HepG2 (cell line): ENCODE measurements at regions of chr6 and their contacts with region 1.

Region 1: DNA sequence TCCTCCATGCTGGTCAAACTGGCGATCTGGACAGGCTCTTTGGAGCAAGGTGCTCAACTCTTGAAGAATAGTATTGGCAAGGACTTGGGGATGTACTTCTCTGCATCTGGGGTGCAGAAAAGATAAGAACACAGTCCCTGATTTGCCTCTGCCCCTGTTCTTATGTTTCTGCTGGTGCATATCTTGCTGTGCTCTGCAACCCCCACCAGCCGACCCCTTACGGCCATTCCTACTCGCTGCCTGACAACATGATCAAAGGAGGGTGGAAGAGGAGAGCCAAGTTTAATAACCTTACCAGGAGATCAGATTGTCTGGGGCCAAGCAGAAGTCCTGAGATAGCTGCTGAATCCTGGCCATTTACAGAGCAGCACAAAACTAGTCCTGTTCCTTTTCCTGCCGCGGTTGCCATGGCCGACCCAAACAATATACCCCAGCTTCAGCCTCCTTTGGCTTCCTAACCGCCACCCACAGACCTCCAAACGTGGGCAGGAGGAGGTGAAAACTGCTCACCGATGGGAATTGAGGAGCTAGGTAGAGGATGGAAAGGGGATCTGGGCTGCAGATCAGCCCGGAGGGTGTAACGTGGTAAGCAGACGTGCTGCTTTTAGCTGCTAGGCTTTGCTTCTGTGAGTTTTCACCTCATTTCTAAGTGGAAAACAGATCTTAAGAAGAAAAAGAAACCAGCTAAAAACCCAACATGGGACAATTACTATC is 60.9 kb downstream of the ATXN1 start:
- DNase-seq: no peak
- ATAC-seq: no peak; the same call in 2 of the 3 replicates
- H3K4me3 ChIP-seq: no peak overlapping the region; a peak in 1 of 6 replicates
- H3K27ac ChIP-seq: peak overlapping the region; percentile 71
- H3K4me1 ChIP-seq: peaks cover 61% of the 10 kb centered on the region
- H3K27me3 ChIP-seq: no peaks in the 10 kb centered on the region
- CTCF ChIP-seq: no peak
- EP300 ChIP-seq: no peak
- POLR2A ChIP-seq: no peak
- RAD21 ChIP-seq: no peak

Region 2: DNA sequence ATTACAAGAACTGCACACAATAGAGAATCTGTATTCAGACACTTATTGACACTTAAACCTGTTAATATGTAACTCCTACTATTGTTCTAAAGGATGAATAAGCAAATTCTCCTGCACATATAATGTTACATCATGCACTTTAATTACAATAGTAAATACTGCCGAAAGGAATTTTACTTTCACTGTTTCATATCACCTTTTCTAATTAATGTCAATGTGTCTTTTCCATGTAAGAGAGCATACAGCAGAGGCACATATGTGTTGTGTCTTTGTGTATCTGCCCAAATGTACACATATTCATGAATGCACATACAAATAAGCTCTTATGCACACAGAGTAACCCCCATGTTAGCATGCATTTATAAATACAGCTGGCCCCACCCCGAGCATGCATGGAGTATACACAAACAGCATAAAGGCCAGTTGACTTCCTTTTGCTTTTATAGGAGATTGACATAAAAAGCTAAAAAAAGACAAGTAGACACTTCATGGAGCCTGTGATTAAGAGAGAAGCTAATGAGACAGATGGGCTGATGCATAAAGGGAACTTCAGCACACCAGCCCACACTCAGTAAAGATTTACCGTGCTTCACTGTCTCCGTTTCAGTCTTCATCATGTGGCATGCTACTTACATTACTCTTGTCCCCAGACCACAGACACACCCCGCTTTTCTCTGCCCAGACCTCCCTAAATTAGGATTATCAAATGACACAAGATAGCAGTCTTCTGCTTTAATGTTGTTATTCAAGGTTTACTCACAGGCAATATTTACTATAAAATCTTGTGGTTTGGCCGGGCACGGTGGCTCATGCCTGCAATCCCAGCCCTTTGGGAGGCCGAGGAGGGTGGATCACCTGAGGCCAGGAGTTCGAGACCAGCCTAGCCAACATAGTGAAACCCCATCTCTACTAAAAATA is 123.6 kb before region 1 on chr6:
- CTCF ChIA-PET with region 1: no interaction called
- POLR2A ChIA-PET with region 1: no interaction called
- in situ Hi-C with region 1: no loop called
- intact Hi-C with region 1: no loop called
- DNase-seq: peak; percentile 65
- ATAC-seq: peak; percentile 33; the same call in 2 of the 3 replicates
- H3K4me3 ChIP-seq: no peak overlapping the region
- H3K27ac ChIP-seq: no peak overlapping the region
- H3K4me1 ChIP-seq: peaks cover 35% of the 10 kb centered on the region
- H3K27me3 ChIP-seq: no peaks in the 10 kb centered on the region
- CTCF ChIP-seq: no peak
- EP300 ChIP-seq: peak in 1 of 2 experiments; percentile 17; a peak in 1 of 4 replicates
- POLR2A ChIP-seq: no peak
- RAD21 ChIP-seq: no peak

Region 3: GRCh38 chr6:16625291-16626265 is 74.8 kb before region 1 on chr6:
- CTCF ChIA-PET with region 1: no interaction called
- POLR2A ChIA-PET with region 1: no interaction called
- in situ Hi-C with region 1: no loop called
- intact Hi-C with region 1: no loop called
- DNase-seq: no peak
- ATAC-seq: no peak
- H3K4me3 ChIP-seq: no peak overlapping the region
- H3K27ac ChIP-seq: no peak overlapping the region
- H3K4me1 ChIP-seq: peaks cover 10% of the 10 kb centered on the region; the same call in 1 of the 2 replicates
- H3K27me3 ChIP-seq: no peaks in the 10 kb centered on the region
- CTCF ChIP-seq: no peak
- EP300 ChIP-seq: no peak
- POLR2A ChIP-seq: no peak
- RAD21 ChIP-seq: no peak

Region 4: DNA sequence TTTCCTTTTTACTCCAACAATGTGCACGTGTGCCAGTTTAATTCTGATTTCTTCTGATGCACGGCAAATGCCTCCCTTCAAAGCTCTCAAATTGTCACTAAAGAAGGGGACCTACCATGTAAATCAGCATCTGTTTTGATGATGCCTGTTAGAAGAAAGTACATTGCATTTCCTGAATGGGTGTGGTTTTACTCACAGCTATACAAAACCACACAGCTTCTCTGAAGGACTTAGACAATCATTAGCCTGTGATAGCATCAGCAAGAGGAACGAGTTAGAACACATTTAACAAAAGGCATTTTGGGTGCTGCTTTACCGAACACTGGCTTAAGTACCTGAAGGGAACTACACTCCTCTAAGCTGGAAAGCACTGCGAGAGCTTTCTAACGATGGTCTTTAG is 48.5 kb before region 1 on chr6:
- CTCF ChIA-PET with region 1: no interaction called
- POLR2A ChIA-PET with region 1: no interaction called
- in situ Hi-C with region 1: no loop called
- intact Hi-C with region 1: no loop called
- DNase-seq: no peak
- ATAC-seq: no peak
- H3K4me3 ChIP-seq: no peak overlapping the region
- H3K27ac ChIP-seq: no peak overlapping the region
- H3K4me1 ChIP-seq: no peaks in the 10 kb centered on the region
- H3K27me3 ChIP-seq: no peaks in the 10 kb centered on the region
- CTCF ChIP-seq: no peak
- EP300 ChIP-seq: no peak
- POLR2A ChIP-seq: no peak
- RAD21 ChIP-seq: no peak

Region 5: DNA sequence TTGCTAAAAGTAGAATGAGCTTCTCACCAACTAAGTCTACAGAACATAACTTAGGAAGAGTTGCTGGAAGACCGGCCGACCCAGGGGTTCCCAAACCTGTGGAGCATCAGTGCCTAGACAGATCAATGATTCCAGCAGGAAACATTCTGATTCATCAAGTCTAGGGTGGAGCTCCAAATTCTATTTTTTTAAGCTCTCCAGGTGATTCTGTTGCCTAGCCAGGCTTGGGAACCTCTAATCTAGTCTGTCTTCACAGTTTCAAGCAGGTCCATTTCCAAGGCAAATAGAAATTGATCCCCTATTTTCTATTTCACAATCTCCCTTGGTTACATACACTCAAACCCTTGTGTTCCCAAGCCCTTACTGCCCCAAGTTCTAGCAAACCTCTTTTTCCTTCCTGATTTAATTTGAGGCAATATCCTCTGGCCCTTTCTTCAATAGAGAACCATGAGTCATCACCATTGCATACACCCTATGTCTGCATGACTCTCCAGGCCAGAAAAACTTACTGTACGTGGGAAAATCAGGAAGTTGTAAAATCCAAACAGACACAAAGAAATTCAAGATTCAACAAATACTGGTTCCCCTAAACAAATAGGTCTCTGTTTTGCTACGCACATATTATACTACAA is 52.0 kb after region 1 on chr6:
- CTCF ChIA-PET with region 1: no interaction called
- POLR2A ChIA-PET with region 1: interaction called, 10 read pairs
- in situ Hi-C with region 1: no loop called
- intact Hi-C with region 1: loop called (anchors 2 kb)
- DNase-seq: peak; percentile 74
- ATAC-seq: peak; percentile 53
- H3K4me3 ChIP-seq: no peak overlapping the region
- H3K27ac ChIP-seq: peak overlapping the region; percentile 45
- H3K4me1 ChIP-seq: peaks cover 98% of the 10 kb centered on the region
- H3K27me3 ChIP-seq: no peaks in the 10 kb centered on the region
- CTCF ChIP-seq: no peak
- EP300 ChIP-seq: peak in 1 of 2 experiments; percentile 33; a peak in 1 of 4 replicates
- POLR2A ChIP-seq: no peak
- RAD21 ChIP-seq: no peak

Region 6: DNA sequence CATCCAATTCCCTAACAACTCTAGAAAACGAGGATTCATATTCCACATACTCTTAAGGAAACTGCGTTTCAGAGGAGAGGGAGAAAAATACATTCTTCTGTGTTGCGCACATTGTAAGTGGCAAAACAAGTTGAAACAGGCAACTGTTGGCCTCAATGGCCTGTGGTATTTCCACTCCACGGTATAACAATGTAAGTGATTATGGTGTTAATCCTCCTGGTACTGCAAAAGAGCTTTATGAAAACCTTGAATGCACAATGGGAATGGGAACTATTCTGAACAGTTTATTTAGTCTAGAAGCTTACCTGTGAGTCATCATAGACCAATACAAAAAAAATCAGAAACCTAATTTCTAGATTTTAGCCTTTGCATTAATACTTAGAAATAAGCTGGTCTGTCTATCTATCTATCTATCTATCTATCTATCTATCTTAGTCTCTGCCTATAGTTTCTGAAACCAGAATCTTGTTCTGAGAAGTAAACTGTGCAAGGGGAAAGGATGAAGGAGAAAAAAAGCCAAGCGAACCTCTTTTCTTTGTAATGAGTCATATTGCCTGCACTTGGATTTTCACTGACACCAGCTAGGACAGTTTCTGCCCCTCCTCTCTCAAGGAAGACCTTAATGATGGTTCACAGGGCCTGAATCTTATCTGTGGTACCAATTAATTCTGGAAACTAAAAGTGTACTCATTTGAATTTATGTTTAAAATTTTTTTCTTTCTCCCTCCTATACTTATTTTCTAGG is 1788.3 kb after region 1 on chr6:
- CTCF ChIA-PET with region 1: no interaction called
- POLR2A ChIA-PET with region 1: no interaction called
- in situ Hi-C with region 1: no loop called
- intact Hi-C with region 1: no loop called
- DNase-seq: no peak
- ATAC-seq: no peak
- H3K4me3 ChIP-seq: no peak overlapping the region
- H3K27ac ChIP-seq: no peak overlapping the region
- H3K4me1 ChIP-seq: no peaks in the 10 kb centered on the region
- H3K27me3 ChIP-seq: no peaks in the 10 kb centered on the region
- CTCF ChIP-seq: no peak
- EP300 ChIP-seq: no peak
- POLR2A ChIP-seq: no peak
- RAD21 ChIP-seq: no peak